ENCODE measurements at regions of chr13 and their contacts with region 1.

Region 1: GRCh38 chr13:46552889-46553510 is at the start of gene LRCH1:
- DNase-seq: peak; percentile 93
- ATAC-seq: peak; percentile 90
- H3K4me3 Mint-ChIP-seq: peak within 1 kb of the TSS; percentile 95
- H3K27ac Mint-ChIP-seq: peak within 1 kb of the TSS; percentile 88
- H3K4me1 Mint-ChIP-seq: peaks cover 41% of the 10 kb centered on the region
- H3K27me3 Mint-ChIP-seq: peaks cover 5% of the 10 kb centered on the region
- total RNA-seq, gene LRCH1: 15.3 to 18.0 TPM

Region 2: GRCh38 chr13:46490129-46490528 is 62.9 kb before region 1 on chr13:
- CTCF ChIA-PET with region 1: interaction called, 10 read pairs
- POLR2A ChIA-PET with region 1: no interaction called
- DNase-seq: no peak
- ATAC-seq: no peak
- H3K4me3 Mint-ChIP-seq: no peak overlapping the region
- H3K27ac Mint-ChIP-seq: no peak overlapping the region
- H3K4me1 Mint-ChIP-seq: no peaks in the 10 kb centered on the region
- H3K27me3 Mint-ChIP-seq: no peaks in the 10 kb centered on the region

Region 3: GRCh38 chr13:46565808-46566750 is 13.1 kb after region 1 on chr13:
- CTCF ChIA-PET with region 1: interaction called, 19 read pairs
- POLR2A ChIA-PET with region 1: interaction called, 3 read pairs
- DNase-seq: no peak
- ATAC-seq: no peak
- H3K4me3 Mint-ChIP-seq: no peak overlapping the region
- H3K27ac Mint-ChIP-seq: no peak overlapping the region
- H3K4me1 Mint-ChIP-seq: peaks cover 6% of the 10 kb centered on the region
- H3K27me3 Mint-ChIP-seq: no peaks in the 10 kb centered on the region

Region 4: DNA sequence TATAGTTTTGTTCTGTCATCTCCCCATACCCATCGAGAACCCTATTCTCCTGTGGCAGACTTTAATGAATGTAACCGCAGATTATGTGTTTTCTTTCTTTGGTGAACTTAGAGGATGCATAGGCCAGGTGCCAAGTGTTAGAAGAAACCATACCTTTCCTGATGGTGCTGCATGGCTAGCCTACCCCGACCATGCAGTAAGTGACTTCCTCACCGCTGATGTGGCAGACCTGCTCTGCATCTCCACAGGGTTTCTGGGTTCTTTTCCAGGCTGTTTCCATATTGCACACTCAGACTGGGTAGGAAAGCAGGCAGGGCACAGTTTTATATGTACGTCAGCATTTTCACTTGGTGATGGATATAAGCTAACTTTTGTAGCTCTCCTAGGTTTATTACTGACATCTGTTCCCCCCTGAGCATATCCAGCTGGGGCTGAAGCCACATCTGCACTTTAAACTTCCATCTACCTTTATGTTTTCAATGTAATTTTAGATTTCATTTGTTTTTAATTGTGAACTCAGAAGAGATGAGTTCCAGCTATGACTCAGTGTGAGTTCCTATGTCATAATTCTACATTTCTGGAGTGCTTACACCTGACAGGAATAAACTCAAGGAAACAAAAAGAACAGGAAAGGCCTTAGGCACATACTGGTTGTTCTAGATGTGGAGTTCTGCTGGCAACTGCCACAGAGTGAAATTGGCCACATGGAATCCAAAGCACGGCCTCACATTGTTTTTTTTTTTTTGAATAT is 42.3 kb after region 1 on chr13:
- CTCF ChIA-PET with region 1: interaction called, 21 read pairs
- POLR2A ChIA-PET with region 1: no interaction called
- DNase-seq: no peak
- ATAC-seq: no peak
- H3K4me3 Mint-ChIP-seq: no peak overlapping the region
- H3K27ac Mint-ChIP-seq: no peak overlapping the region
- H3K4me1 Mint-ChIP-seq: peaks cover 89% of the 10 kb centered on the region
- H3K27me3 Mint-ChIP-seq: no peaks in the 10 kb centered on the region

Region 5: DNA sequence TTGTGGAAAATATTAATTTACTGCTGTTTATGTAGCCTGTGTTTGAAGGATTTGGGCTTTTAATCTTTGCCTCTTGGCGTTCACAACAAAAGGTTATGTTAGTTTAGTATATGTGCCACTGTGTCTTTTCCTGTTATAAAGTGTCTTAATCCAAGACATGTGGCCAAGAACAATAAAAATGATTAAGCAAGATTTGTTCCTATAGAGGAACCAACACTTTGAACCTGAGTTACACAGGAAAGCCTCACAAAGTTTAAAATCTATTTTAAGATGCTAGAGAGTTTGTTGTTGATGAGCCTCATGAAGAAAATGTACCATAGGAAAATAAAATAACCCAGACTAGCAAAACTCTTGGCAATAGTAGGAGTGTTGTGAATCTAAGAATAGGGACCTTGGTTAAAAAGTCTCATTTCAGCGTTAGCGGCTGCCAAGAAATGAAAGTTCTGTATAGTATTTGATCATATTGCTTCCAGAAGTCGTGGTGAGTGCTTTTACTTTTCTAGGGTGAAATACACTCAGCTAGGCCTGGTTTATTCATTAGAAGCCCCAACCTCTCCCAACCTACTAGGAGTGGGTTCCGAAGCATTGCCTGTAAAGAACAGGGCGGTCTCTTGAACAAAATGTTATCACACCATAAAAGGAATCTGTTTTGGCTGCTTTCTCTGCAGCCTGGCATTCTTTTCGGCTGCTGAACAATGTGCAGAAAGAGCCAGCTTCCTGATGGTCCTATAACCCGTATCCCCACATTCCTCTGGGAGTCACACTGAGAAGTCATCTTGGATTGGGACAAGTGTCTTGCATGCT is 102.6 kb after region 1 on chr13:
- CTCF ChIA-PET with region 1: interaction called, 11 read pairs
- POLR2A ChIA-PET with region 1: no interaction called
- DNase-seq: no peak
- ATAC-seq: no peak
- H3K4me3 Mint-ChIP-seq: peak overlapping the region; percentile 8
- H3K27ac Mint-ChIP-seq: no peak overlapping the region
- H3K4me1 Mint-ChIP-seq: peaks cover 29% of the 10 kb centered on the region
- H3K27me3 Mint-ChIP-seq: no peaks in the 10 kb centered on the region

Region 6: GRCh38 chr13:46687810-46688209 is 134.8 kb after region 1 on chr13:
- CTCF ChIA-PET with region 1: interaction called, 24 read pairs
- POLR2A ChIA-PET with region 1: no interaction called
- DNase-seq: peak; percentile 35
- ATAC-seq: peak; percentile 93
- H3K4me3 Mint-ChIP-seq: no peak overlapping the region
- H3K27ac Mint-ChIP-seq: no peak overlapping the region
- H3K4me1 Mint-ChIP-seq: peaks cover 32% of the 10 kb centered on the region
- H3K27me3 Mint-ChIP-seq: no peaks in the 10 kb centered on the region

Region 7: GRCh38 chr13:46751811-46752635 is 199.0 kb after region 1 on chr13:
- CTCF ChIA-PET with region 1: interaction called, 12 read pairs
- POLR2A ChIA-PET with region 1: no interaction called
- DNase-seq: peak; percentile 86
- ATAC-seq: peak; percentile 98
- H3K4me3 Mint-ChIP-seq: peak overlapping the region; percentile 39
- H3K27ac Mint-ChIP-seq: peak overlapping the region; percentile 88
- H3K4me1 Mint-ChIP-seq: peaks cover 52% of the 10 kb centered on the region
- H3K27me3 Mint-ChIP-seq: peaks cover 2% of the 10 kb centered on the region

Region 8: GRCh38 chr13:46817095-46817494 is 264.1 kb after region 1 on chr13:
- CTCF ChIA-PET with region 1: no interaction called
- POLR2A ChIA-PET with region 1: no interaction called
- DNase-seq: no peak
- ATAC-seq: no peak
- H3K4me3 Mint-ChIP-seq: no peak overlapping the region
- H3K27ac Mint-ChIP-seq: no peak overlapping the region
- H3K4me1 Mint-ChIP-seq: peaks cover 1% of the 10 kb centered on the region
- H3K27me3 Mint-ChIP-seq: peaks cover 12% of the 10 kb centered on the region

Region 9: DNA sequence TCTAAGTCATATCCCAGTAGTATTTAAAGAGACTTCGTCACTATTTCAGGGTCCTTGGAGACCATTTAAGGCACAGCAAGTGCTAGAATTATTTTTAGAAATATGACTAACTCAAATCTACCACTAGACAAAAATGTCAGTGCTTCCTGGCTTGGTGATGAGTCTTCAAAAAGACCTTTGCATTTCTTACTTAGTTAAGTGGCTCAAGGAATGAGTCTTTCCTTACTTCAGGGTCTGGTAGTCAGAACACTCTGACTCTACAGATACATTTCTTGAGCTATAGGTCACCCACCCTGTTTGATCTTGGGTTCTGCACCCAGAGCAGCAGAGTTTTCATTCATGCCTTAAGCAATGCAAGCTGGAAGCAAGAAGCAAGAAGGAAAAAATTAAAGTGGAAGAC is 534.8 kb after region 1 on chr13:
- CTCF ChIA-PET with region 1: no interaction called
- POLR2A ChIA-PET with region 1: no interaction called
- DNase-seq: no peak
- ATAC-seq: no peak
- H3K4me3 Mint-ChIP-seq: no peak overlapping the region
- H3K27ac Mint-ChIP-seq: no peak overlapping the region
- H3K4me1 Mint-ChIP-seq: no peaks in the 10 kb centered on the region
- H3K27me3 Mint-ChIP-seq: peaks cover 3% of the 10 kb centered on the region

Measured in activated CD8-positive, alpha-beta T cell treated with anti-CD3 and anti-CD28 coated beads, Interleukin-2, amount 10 ng/mL, durations not matched to agents 7 days and 5 days (primary cell).